T-cell (primary cell): ENCODE measurements at regions of chr7 and their contacts with region 1.

Region 1: DNA sequence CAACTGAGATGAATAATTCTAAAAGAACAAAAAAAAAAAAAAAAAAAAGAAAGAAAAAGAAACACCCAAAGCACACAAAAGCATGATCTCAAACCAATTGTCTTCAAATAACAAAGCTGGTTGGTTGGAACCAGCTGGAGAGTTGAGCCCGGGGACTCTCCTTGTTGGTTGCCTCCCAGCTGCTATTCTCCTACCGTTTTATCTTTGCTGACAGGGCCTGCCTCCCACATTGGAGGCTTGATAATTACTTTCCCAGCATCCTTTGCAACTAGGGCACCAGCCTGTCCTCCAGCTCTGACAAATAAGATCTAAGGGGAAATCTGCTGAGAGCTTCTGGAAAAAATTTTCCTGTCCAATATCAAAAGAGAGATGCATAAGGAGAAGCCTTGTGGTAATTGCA is 6.8 kb downstream of the PON1 start:
- DNase-seq: no peak
- ATAC-seq: no peak
- H3K4me3 ChIP-seq: no peak overlapping the region
- H3K4me3 Mint-ChIP-seq: no peak overlapping the region
- H3K27ac ChIP-seq: no peak overlapping the region
- H3K27ac Mint-ChIP-seq: no peak overlapping the region
- H3K4me1 ChIP-seq: no peaks in the 10 kb centered on the region
- H3K4me1 Mint-ChIP-seq: no peaks in the 10 kb centered on the region
- H3K27me3 ChIP-seq: no peaks in the 10 kb centered on the region
- H3K27me3 Mint-ChIP-seq: peaks cover 2 to 15% of the 10 kb centered on the region in 2 donors

Region 2: GRCh38 chr7:94183289-94183749 is 1134.2 kb before region 1 on chr7:
- CTCF ChIA-PET with region 1: no interaction called
- POLR2A ChIA-PET with region 1: interaction called in 1 of 2 experiments, 12 read pairs
- DNase-seq: no peak
- ATAC-seq: no peak
- H3K4me3 ChIP-seq: no peak overlapping the region
- H3K4me3 Mint-ChIP-seq: no peak overlapping the region
- H3K27ac ChIP-seq: no peak overlapping the region
- H3K27ac Mint-ChIP-seq: no peak overlapping the region
- H3K4me1 ChIP-seq: no peaks in the 10 kb centered on the region
- H3K4me1 Mint-ChIP-seq: no peaks in the 10 kb centered on the region
- H3K27me3 ChIP-seq: no peaks in the 10 kb centered on the region
- H3K27me3 Mint-ChIP-seq: no peaks in the 10 kb centered on the region

Region 3: DNA sequence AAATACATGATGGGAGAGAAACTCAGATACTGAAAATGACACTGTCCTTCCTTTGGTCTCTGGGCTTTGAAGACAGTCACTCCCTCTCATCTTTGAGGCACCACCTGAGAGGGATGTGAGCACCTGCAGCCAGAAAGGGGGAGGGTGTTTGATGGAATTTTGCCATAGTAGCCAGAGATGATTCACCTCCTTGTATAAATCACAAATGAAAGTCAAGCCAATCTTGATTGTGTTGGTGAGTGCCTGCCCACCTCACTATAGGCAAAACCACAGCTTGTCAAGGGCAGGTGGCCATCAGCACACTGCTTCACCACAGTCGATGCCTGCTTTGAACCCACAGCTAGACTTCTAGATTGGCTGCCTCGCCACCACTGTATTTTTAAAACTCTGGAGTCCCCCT is 41.4 kb before region 1 on chr7:
- CTCF ChIA-PET with region 1: no interaction called
- POLR2A ChIA-PET with region 1: no interaction called
- DNase-seq: no peak
- ATAC-seq: no peak
- H3K4me3 ChIP-seq: no peak overlapping the region
- H3K4me3 Mint-ChIP-seq: no peak overlapping the region
- H3K27ac ChIP-seq: no peak overlapping the region
- H3K27ac Mint-ChIP-seq: no peak overlapping the region
- H3K4me1 ChIP-seq: no peaks in the 10 kb centered on the region
- H3K4me1 Mint-ChIP-seq: no peaks in the 10 kb centered on the region
- H3K27me3 ChIP-seq: no peaks in the 10 kb centered on the region
- H3K27me3 Mint-ChIP-seq: peaks cover 0 to 16% of the 10 kb centered on the region in 2 donors

Region 4: GRCh38 chr7:95303038-95303905 is 14.3 kb before region 1 on chr7:
- CTCF ChIA-PET with region 1: no interaction called
- POLR2A ChIA-PET with region 1: no interaction called
- DNase-seq: no peak
- ATAC-seq: no peak
- H3K4me3 ChIP-seq: no peak overlapping the region
- H3K4me3 Mint-ChIP-seq: no peak overlapping the region
- H3K27ac ChIP-seq: no peak overlapping the region
- H3K27ac Mint-ChIP-seq: no peak overlapping the region
- H3K4me1 ChIP-seq: no peaks in the 10 kb centered on the region
- H3K4me1 Mint-ChIP-seq: no peaks in the 10 kb centered on the region
- H3K27me3 ChIP-seq: peaks cover 0 to 2% of the 10 kb centered on the region in 2 experiments
- H3K27me3 Mint-ChIP-seq: peaks cover 11% of the 10 kb centered on the region in 2 donors